ENCODE measurements at regions of chr10 and their contacts with region 1.

Region 1: GRCh38 chr10:14954001-14954770 is at the start of gene DCLRE1C:
- DNase-seq: peak; percentile 96
- total RNA-seq, gene DCLRE1C: 3.2 TPM

Region 2: DNA sequence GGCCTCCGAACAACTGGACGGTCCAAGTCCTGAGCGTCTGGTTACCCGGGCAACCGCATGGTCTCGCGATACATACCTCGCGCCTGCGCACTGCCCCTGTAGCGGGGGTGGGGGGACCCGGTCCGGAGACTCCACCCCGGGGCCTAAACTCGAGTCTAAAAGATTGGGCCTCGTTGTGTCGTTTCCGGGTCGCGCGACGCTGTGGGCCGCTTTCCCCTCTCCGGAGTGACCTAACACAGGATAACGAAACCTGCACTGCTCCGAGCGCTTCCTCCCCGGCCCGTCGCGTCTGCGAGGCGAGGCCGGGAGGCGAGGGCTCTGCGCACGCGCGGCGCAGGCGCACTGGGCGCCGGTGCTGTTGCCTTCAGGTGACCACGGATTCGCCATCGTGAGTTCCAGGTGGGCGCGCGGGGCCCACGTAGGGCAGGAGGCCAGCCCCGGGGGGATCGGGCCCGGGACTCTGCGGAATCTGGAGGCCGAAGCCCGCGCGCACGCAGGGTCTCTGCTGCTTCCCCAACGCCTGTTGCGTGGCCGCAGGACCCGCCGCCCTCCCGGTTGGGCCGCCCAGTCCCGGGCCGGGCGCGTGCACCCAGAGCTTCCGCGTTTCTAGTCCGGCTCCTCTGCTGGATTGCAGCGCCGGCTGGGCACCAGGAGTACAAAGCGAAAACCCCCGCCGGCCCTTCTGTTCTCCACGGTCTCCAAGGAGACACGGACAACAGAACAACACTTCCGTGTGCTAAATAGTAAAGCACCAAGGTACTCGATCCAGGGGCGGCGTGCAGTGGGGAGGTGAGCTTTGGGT is 143.0 kb after region 1 on chr10 and contains the start of gene RPP38:
- intact Hi-C with region 1: loop called (anchors 5 kb)
- DNase-seq: peak; percentile 98
- total RNA-seq, gene RPP38: 8.0 TPM